GM10248 (cell line): ENCODE measurements at regions of chr6 and their contacts with region 1.

Region 1: DNA sequence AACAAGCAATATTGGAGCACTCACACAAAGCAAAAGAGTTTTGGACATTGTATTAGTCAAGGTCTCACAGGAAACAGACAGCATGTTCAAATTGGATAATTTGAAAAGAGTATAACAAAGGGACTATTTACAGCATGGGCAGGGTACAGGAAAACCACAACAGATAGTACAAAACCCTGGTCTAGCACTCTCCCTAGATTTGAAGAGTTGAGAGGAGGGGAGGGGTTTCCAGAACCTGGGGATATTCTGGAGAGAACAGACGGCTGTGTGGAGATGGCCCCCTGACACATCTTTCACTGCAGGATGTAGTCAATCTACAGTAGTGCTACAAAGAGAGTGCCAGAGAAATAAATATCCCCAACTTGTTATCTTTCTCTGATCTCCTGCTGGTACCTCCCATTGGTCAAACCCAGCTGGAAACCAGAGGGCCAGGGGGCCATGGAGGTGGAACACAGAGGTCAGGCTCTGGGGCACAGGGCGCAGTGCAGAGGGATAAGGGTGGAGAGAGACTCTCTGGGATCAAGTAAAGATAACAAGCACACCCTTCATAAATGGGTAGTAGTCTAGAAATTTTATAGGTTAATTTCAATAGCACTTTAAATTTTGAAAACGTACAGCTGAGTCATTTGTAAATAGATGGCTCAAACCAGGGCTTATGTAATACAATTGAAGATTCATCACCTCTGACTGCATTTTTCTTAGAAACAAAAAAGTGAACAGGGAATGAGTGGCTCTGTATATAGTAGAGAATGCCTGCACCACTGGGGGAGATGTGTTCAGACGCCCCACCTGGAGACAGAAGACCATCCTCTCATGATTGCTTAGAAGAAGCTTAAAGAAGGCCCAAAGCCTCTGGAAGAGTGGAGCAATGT is 25.7 kb downstream of the RCAN2 start:
- DNase-seq: no peak
- CTCF ChIP-seq: no peak

Region 2: GRCh38 chr6:46305836-46306235 is 159.7 kb before region 1 on chr6:
- CTCF ChIA-PET with region 1: no interaction called
- POLR2A ChIA-PET with region 1: no interaction called
- DNase-seq: no peak
- CTCF ChIP-seq: no peak

Region 3: DNA sequence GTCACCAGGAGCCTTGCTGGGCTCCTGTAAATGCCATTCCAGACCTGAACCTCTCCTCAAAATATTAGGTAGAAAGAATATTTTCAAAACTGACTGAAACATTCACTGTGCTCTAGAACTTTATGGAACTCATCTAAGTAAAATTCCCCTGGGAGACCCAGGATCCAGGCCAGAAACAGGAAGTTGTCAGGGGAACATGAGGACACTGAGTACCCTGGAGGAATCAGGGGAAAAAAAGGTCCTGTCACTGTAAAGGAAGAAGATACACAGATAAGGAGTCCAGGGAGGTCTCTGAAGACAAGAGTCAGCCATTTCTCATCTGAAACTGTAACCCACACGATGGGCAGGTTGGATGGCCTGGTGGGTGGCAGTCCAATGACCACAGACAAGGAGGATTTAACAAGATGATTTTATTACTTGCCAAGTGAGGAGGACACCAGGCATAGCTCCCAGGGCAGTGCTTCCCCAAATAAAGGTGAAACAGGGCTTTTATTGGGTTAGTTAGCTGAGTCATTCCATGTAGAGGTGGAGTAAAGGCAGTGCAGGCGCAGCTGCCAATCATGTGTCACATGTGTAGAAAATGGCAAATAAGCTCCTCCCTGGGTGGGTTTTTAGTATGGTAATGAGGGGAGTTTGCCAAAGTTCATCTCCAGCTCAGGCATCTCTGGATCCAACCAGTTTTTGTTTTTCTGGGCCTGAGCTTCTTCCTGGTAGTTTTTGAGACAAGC is 112.8 kb before region 1 on chr6:
- CTCF ChIA-PET with region 1: no interaction called
- POLR2A ChIA-PET with region 1: no interaction called
- DNase-seq: no peak
- CTCF ChIP-seq: no peak

Region 4: DNA sequence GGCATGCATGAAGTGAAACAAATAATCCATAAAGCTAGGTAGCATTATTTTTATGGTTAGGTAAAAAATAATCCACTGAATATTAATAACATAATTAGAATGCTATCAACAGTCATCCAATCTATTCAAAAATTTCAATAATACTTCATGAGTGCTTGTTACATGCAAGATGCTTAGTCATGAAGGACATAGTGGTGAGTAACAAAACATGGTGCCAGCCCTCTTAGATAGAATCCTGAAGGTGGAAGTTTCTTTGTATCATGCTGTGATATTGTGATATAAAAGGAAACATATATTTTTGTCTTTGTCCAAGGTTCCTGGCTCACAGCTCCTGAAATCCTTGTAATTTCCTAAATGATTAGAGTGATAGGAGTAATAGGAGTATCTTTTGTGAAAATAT is 10.8 kb after region 1 on chr6:
- CTCF ChIA-PET with region 1: interaction called, 15 read pairs
- POLR2A ChIA-PET with region 1: no interaction called
- DNase-seq: no peak
- CTCF ChIP-seq: no peak